Activated T-helper 2 cell treated with anti-CD3 and anti-CD28 coated beads, Interferon-gamma antibody, Interleukin-2, Interleukin-4, amounts not matched to agents 10 μg/mL and 5 μg/mL and 100 μg/mL, durations not matched to agents 14 hours and 24 hours and 36 hours (primary cell): ENCODE measurements at regions of chr1 and their contacts with region 1.

Region 1: DNA sequence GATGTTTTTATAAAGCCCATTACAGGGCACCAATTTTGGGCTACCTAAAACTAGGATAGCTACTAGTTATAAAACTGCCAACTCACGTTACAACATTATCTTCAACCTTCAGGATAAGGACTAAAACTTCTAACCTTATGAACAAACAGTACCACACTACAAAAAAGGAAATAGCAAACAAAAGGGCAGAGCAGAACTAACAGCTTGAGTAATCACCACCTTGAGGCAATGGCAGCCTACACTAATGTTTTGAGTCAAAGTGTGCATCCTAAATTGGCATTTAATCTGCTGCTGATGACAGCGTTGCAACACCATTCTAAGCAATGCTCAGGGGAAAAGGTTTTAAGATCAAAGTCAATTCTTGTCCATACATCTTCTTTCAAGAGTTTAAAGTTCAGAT is 27.2 kb downstream of the PTP4A2 start:
- DNase-seq: no peak
- H3K4me3 Mint-ChIP-seq: peak overlapping the region; percentile 37
- H3K27ac Mint-ChIP-seq: peak overlapping the region; percentile 75
- H3K4me1 Mint-ChIP-seq: peaks cover 59% of the 10 kb centered on the region
- H3K27me3 Mint-ChIP-seq: no peaks in the 10 kb centered on the region

Region 2: GRCh38 chr1:31828341-31828740 is 82.6 kb before region 1 on chr1:
- intact Hi-C with region 1: loop called (anchors 5 kb)
- DNase-seq: no peak
- H3K4me3 Mint-ChIP-seq: no peak overlapping the region
- H3K27ac Mint-ChIP-seq: peak overlapping the region; percentile 48
- H3K4me1 Mint-ChIP-seq: peaks cover 24% of the 10 kb centered on the region
- H3K27me3 Mint-ChIP-seq: no peaks in the 10 kb centered on the region

Region 3: DNA sequence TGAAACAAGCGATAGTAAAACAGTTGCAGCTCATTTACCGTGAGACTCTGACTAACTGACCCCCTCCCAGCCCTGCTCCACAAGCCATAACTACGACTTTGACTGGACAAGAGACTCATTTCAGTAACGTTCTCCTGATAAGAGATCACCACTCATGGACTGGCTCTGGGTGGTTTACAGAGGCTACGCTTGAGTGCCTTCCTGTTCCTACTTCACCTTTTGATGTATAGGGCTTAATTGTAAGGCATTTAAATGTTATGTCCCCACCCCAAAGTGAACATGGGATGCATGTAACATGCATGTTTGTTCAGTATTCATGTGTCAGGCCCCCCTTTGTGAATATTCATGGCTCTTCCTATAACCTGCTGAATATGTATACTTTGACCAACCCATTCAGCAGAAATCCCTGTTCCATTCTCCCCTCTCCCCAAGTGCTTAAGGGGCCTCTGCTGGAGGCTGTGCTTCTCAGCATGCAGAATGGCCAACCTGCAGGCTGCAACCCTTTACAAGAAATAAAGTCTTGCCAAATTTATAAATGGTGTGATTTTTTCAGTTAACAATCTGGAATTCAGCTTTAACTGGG is 44.4 kb before region 1 on chr1:
- intact Hi-C with region 1: no loop called
- DNase-seq: no peak
- H3K4me3 Mint-ChIP-seq: no peak overlapping the region
- H3K27ac Mint-ChIP-seq: no peak overlapping the region
- H3K4me1 Mint-ChIP-seq: peaks cover 6% of the 10 kb centered on the region
- H3K27me3 Mint-ChIP-seq: no peaks in the 10 kb centered on the region

Region 4: GRCh38 chr1:31891280-31891679 is 19.7 kb before region 1 on chr1:
- intact Hi-C with region 1: loop called (anchors 1 kb)
- DNase-seq: peak; percentile 21
- H3K4me3 Mint-ChIP-seq: no peak overlapping the region
- H3K27ac Mint-ChIP-seq: peak overlapping the region; percentile 52
- H3K4me1 Mint-ChIP-seq: peaks cover 32% of the 10 kb centered on the region
- H3K27me3 Mint-ChIP-seq: no peaks in the 10 kb centered on the region

Region 5: DNA sequence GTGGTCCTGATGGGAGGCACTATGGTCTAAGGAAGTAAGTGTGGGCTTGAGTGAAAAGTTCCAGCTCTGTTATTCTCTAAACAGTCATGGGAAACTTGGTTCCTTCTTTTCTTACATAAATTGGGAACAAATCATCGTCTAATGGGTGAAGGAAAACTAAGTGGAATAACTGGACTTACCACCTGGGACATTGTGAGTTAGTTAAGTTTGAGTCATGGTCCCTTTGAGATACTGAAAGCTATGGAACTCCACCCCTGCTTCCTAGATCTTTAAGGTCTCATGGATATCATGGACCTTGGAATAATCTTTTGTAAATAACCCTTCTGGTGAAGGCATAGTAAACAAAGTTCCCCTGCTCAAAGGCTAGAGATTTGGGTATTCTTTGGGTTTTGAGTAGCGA is 252.5 kb after region 1 on chr1:
- intact Hi-C with region 1: no loop called
- DNase-seq: no peak
- H3K4me3 Mint-ChIP-seq: no peak overlapping the region
- H3K27ac Mint-ChIP-seq: no peak overlapping the region
- H3K4me1 Mint-ChIP-seq: peaks cover 7% of the 10 kb centered on the region
- H3K27me3 Mint-ChIP-seq: no peaks in the 10 kb centered on the region